Aorta (tissue), 5 donors: ENCODE measurements at regions of chr16 and their contacts with region 1.

Region 1: GRCh38 chr16:4392382-4393239 is 21.0 kb downstream of the VASN start:
- DNase-seq: peak; percentile 74 to 82
- ATAC-seq: no peak
- H3K4me3 ChIP-seq: no peak overlapping the region
- H3K27ac ChIP-seq: peak overlapping the region; percentile 54 to 73
- H3K4me1 ChIP-seq: peaks cover 0 to 4% of the 10 kb centered on the region in 2 donors
- H3K27me3 ChIP-seq: no peaks in the 10 kb centered on the region

Region 2: GRCh38 chr16:4371357-4372000 is 21.1 kb before region 1 on chr16 and contains the start of gene VASN:
- intact Hi-C with region 1: loop called in 1 of 2 experiments (anchors 2 kb)
- DNase-seq: peak; percentile 88 to 96
- ATAC-seq: peak; percentile 77
- H3K4me3 ChIP-seq: peak within 1 kb of the TSS; percentile 73 to 84
- H3K27ac ChIP-seq: peak within 1 kb of the TSS; percentile 85 to 92
- H3K4me1 ChIP-seq: no peaks in the 10 kb centered on the region
- H3K27me3 ChIP-seq: no peaks in the 10 kb centered on the region
- total RNA-seq, gene VASN: 67.0 to 120 TPM

Region 3: DNA sequence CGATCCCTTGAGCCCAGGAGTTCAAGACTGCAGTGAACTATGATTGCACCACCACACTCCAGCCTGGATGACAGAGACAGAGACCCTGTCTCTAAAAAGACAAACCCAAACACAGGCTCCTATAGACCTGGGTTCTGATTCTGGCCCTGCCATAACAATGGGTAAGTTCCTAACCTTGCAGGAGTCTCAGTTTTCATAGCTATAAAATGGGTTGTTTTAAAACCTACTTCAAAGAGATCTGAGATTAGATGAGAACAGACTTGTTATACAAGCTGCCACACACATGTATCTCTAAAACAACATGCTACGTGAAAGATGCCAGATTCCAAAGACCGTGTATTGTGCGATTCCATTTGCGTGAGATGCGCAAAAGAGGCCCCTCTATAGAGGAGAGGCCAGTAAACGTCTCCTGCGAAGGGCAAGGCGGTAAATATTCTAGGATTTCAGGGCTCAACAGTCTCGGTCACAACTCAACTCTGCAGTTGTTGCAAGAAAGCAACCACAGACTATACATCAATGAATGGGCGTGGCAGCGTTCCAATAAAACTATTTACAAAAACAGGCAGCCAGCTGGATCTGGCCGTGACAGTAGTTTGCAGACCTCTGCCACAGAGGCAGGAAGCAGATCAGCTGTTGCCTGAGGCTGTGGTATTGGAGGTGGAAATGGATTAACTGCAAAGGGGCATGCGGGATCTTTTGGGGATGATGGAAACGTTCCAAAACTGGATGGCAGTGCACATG is 17.9 kb after region 1 on chr16:
- intact Hi-C with region 1: loop called in 1 of 2 experiments (anchors 1 kb)
- DNase-seq: peak in 1 of 2 donors; percentile 35
- ATAC-seq: no peak
- H3K4me3 ChIP-seq: no peak overlapping the region
- H3K27ac ChIP-seq: no peak overlapping the region
- H3K4me1 ChIP-seq: no peaks in the 10 kb centered on the region
- H3K27me3 ChIP-seq: no peaks in the 10 kb centered on the region

Region 4: DNA sequence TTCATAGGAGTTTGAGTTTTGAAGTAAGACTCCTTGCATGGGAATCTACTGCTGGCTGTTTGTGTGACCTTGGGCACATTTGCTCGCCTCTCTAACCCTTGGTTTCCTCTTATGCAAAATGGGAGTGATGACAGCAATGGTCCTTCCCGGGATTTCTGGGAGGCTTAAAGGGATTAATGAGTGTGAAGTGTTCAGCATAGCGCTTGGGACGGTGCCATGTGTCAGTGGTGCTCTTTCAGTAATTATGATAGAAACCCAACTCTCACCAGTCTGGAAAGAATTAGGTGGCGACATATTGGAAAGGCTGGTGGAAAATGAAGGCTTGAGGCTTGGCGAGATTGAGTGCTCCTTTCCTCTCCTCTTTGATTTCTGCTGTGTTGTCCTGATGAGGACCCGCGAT is 1134.2 kb after region 1 on chr16:
- intact Hi-C with region 1: no loop called
- DNase-seq: no peak
- ATAC-seq: no peak
- H3K4me3 ChIP-seq: no peak overlapping the region
- H3K27ac ChIP-seq: no peak overlapping the region
- H3K4me1 ChIP-seq: no peaks in the 10 kb centered on the region
- H3K27me3 ChIP-seq: no peaks in the 10 kb centered on the region